WTC11 (cell line): ENCODE measurements at regions of chr14 and their contacts with region 1.

Region 1: GRCh38 chr14:75293920-75294642 is 15.5 kb downstream of the FOS start:
- DNase-seq: peak; percentile 95
- ATAC-seq: peak; percentile 86
- H3K4me3 Mint-ChIP-seq: peak overlapping the region; percentile 83
- H3K27ac Mint-ChIP-seq: peak overlapping the region; percentile 95
- H3K4me1 Mint-ChIP-seq: peaks cover 12% of the 10 kb centered on the region
- H3K27me3 Mint-ChIP-seq: no peaks in the 10 kb centered on the region; the same call in 1 of the 2 replicates
- CTCF ChIP-seq: no peak

Region 2: GRCh38 chr14:75258615-75259466 is 35.2 kb before region 1 on chr14:
- CTCF ChIA-PET with region 1: interaction called, 6 read pairs
- POLR2A ChIA-PET with region 1: interaction called, 35 read pairs
- DNase-seq: peak; percentile 100
- ATAC-seq: peak; percentile 93
- H3K4me3 Mint-ChIP-seq: peak overlapping the region; percentile 94
- H3K27ac Mint-ChIP-seq: peak overlapping the region; percentile 100
- H3K4me1 Mint-ChIP-seq: peaks cover 34% of the 10 kb centered on the region
- H3K27me3 Mint-ChIP-seq: peaks cover 3% of the 10 kb centered on the region; the same call in 1 of the 2 replicates
- CTCF ChIP-seq: no peak